ENCODE measurements at regions of chr12 and their contacts with region 1.

Region 1: DNA sequence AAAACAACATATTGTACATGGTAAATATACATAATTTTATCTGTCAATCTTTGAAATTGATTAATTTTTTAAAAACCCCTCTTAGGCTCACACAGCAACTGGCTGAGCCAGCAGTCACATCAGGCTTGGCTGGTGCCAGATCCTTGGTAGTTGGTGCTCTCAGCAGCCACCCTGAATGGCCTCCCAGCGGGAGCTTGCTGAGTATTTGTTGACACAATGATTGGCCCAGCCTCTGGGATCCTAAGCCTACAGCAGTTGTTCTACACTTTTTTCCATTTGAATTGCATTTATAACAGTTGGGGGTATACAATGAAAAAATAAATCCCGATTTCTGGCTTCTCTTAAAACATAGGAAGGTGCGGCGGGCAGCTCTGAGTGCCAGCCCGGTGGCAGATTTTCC is 11.1 kb downstream of the PRKAB1 start:
- DNase-seq: no peak
- H3K4me3 Mint-ChIP-seq: no peak overlapping the region
- H3K27ac Mint-ChIP-seq: no peak overlapping the region
- H3K4me1 Mint-ChIP-seq: peaks cover 27% of the 10 kb centered on the region
- H3K27me3 Mint-ChIP-seq: no peaks in the 10 kb centered on the region

Region 2: DNA sequence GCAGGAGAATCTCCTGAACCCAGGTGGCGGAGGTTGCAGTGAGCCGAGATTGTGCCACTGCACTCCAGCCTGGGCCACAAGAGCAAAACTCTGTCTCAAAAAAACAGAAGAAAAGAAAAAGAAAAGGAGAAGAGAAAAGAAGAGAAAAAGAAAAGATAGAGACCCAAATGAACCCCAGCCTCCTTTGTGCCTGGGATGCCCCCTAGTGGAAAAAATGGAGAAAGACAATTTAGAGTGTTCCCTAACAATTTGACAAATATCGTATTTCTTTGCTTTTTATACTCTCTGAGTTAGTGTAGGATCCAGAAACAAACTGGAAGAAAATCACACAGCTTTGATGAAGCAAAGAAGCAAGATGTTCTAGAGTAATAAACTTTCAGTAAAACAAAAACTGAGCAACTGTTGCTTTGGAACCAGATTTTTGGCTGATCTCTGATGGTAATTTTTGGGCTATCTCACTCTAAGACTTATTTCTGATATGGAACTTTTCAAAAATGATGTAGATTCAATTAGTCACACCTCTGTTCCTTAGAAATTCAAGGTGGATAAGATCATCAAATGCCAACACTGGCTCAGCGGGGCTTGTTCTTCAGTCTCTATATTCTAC is 29.8 kb before region 1 on chr12:
- CTCF ChIA-PET with region 1: no interaction called
- POLR2A ChIA-PET with region 1: no interaction called
- DNase-seq: peak; percentile 12
- H3K4me3 Mint-ChIP-seq: no peak overlapping the region
- H3K27ac Mint-ChIP-seq: no peak overlapping the region
- H3K4me1 Mint-ChIP-seq: no peaks in the 10 kb centered on the region
- H3K27me3 Mint-ChIP-seq: peaks cover 6% of the 10 kb centered on the region

Region 3: DNA sequence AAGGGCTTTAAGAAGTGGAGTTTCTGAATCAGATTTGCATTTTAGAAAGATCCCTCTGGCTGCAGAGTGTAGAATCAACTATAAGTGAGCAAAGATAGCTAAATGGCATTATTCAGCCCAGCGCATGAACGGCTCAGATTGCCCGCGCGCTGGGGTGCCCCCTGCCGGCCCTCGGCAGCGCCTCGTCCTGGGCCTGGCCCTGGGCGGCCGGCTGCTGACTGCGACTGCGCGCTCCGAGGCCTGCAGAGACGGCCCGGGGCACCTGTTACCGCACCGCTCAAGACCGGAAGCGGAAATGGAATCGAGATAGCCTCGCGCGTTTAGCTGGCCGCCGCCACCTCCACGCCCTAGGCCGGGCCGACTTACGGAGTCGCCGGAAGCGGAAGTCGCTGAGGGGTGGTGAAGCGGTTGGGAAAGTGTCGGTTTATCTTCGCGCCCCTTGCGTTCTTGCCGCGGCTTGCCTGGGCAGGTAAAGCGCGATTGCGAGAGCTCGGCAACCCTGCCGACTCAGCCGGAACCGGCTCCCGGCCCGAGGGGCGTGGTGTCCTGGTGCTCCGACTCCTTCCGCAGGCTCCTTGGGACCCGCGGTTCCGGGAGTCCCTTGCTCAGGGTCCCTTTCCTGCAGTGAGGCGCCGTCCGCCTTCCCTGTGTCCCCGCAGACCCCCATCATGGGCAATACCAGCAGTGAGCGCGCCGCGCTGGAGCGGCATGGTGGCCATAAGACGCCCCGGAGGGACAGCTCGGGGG is 11.3 kb before region 1 on chr12 and contains the start of gene PRKAB1:
- CTCF ChIA-PET with region 1: interaction called, 10 read pairs
- POLR2A ChIA-PET with region 1: interaction called, 3 read pairs
- DNase-seq: peak; percentile 96
- H3K4me3 Mint-ChIP-seq: peak within 1 kb of the TSS; percentile 89
- H3K27ac Mint-ChIP-seq: peak within 1 kb of the TSS; percentile 93
- H3K4me1 Mint-ChIP-seq: peaks cover 56% of the 10 kb centered on the region
- H3K27me3 Mint-ChIP-seq: no peaks in the 10 kb centered on the region
- total RNA-seq, gene PRKAB1: 30.7 to 37.2 TPM

Measured in activated CD4-positive, alpha-beta T cell treated with anti-CD3 and anti-CD28 coated beads, Interleukin-2, amount 10 ng/mL, durations not matched to agents 7 days and 5 days (primary cell).